Natural killer cell (primary cell): ENCODE measurements at regions of chr4 and their contacts with region 1.

Region 1: DNA sequence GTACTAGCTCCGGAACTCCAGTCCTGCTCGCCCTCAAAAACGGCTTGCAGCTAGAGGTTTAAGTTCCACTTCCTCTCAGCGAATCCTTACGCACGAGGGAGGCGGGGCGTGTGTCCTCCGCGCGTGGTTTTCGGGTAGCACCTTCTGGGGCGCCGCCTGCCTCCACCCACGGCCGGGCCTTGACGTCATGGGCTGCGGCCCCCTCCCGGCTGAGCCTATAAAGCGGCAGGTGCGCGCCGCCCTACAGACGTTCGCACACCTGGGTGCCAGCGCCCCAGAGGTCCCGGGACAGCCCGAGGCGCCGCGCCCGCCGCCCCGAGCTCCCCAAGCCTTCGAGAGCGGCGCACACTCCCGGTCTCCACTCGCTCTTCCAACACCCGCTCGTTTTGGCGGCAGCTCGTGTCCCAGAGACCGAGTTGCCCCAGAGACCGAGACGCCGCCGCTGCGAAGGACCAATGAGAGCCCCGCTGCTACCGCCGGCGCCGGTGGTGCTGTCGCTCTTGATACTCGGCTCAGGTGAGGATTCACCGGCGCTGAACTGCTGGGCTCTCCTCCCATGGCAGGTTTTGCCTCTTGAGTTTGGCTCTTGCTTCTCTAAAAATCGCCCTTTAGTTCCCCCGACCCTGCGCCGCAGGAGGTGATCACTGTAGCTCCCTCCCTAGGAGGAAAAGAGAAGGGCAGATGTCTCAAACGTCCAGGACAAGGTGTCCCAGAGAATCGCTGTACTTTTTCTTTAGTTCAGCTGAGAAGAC is at the start of gene AREG:
- DNase-seq: peak; percentile 91 to 96
- ATAC-seq: peak; percentile 94 to 96 (median 94)
- H3K4me3 ChIP-seq: peak within 1 kb of the TSS; percentile 85
- H3K4me3 Mint-ChIP-seq: peak within 1 kb of the TSS; percentile 90
- H3K27ac ChIP-seq: peak within 1 kb of the TSS; percentile 95
- H3K27ac Mint-ChIP-seq: peak within 1 kb of the TSS; percentile 90 to 95
- H3K4me1 ChIP-seq: peaks cover 7% of the 10 kb centered on the region
- H3K4me1 Mint-ChIP-seq: peaks cover 6 to 16% of the 10 kb centered on the region in 2 donors
- H3K27me3 ChIP-seq: no peaks in the 10 kb centered on the region
- H3K27me3 Mint-ChIP-seq: no peaks in the 10 kb centered on the region
- CTCF ChIP-seq: peak; percentile 62
- total RNA-seq, gene AREG: 11.3 to 47.2 (median 38.2) TPM

Region 2: DNA sequence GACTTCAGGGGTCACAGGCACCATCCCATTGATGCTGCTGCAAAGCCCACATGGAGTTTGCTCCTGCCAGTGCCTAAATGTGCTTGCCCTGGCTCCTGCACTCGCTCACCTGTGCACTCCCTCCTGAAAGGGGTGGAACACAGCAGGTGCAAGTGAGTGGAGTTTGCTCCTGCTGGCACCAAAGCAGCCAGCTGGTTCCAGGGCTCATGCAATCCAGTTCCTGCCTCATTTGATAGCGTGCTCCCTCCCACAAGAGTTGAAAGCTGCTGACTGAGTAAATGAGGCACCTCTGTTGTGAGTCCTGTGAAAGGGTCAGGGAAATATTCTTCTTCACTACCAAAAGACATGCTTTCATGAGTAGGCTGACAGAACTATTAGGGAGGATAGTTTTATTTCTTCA is 674.1 kb before region 1 on chr4:
- intact Hi-C with region 1: no loop called
- DNase-seq: no peak
- ATAC-seq: no peak
- H3K4me3 ChIP-seq: no peak overlapping the region
- H3K4me3 Mint-ChIP-seq: no peak overlapping the region
- H3K27ac ChIP-seq: no peak overlapping the region
- H3K27ac Mint-ChIP-seq: no peak overlapping the region
- H3K4me1 ChIP-seq: no peaks in the 10 kb centered on the region
- H3K4me1 Mint-ChIP-seq: no peaks in the 10 kb centered on the region
- H3K27me3 ChIP-seq: no peaks in the 10 kb centered on the region
- H3K27me3 Mint-ChIP-seq: no peaks in the 10 kb centered on the region
- CTCF ChIP-seq: no peak

Region 3: GRCh38 chr4:74157561-74158465 is 287.3 kb before region 1 on chr4 and contains the start of gene MTHFD2L:
- intact Hi-C with region 1: loop called (anchors 10 kb)
- DNase-seq: peak; percentile 77 to 85
- ATAC-seq: peak; percentile 95 to 97 (median 95)
- H3K4me3 ChIP-seq: peak within 1 kb of the TSS; percentile 55
- H3K4me3 Mint-ChIP-seq: peak within 1 kb of the TSS; percentile 87
- H3K27ac ChIP-seq: peak within 1 kb of the TSS; percentile 77
- H3K27ac Mint-ChIP-seq: peak within 1 kb of the TSS; percentile 84 to 89
- H3K4me1 ChIP-seq: peaks cover 8% of the 10 kb centered on the region
- H3K4me1 Mint-ChIP-seq: peaks cover 22 to 26% of the 10 kb centered on the region in 2 donors
- H3K27me3 ChIP-seq: peaks cover 2% of the 10 kb centered on the region
- H3K27me3 Mint-ChIP-seq: peaks cover 0 to 3% of the 10 kb centered on the region in 2 donors
- CTCF ChIP-seq: no peak
- total RNA-seq, gene MTHFD2L: 9.5 to 11.7 (median 10.4) TPM

Region 4: DNA sequence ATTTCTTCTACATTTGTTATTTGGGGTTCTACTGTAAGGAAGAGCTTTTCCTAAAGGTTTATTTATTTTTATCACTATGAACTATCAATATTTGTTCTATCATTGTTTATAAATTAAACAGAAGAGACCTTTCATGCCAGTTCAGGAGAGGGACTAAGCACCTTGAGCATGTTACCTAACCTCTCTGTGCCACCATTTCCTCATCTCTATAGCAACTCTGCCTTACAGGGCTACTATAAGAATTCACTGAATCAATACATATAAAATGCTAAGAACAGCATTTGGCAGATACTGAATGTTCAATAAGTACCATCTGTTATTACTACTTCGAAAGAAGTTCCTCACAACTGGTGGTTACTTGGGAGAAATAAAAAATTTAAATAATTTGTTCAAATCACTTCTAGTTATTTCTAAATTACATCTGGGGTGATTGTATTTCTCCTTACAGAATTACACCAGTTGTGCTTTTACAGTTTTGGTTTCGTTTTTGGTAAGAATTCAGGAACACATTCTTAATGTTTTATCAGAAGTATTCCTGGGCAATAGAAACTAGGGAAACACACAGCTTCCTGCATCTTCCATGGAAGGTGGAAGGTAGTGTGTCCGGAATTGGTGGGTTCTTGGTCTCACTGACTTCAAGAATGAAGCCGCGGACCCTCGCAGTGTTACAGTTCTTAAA is 47.2 kb before region 1 on chr4:
- intact Hi-C with region 1: loop called (anchors 1 kb)
- DNase-seq: peak in 1 of 2 donors; percentile 64
- ATAC-seq: peak; percentile 75 to 85 (median 80)
- H3K4me3 ChIP-seq: peak overlapping the region; percentile 94
- H3K4me3 Mint-ChIP-seq: peak overlapping the region; percentile 100
- H3K27ac ChIP-seq: peak overlapping the region; percentile 90
- H3K27ac Mint-ChIP-seq: peak overlapping the region; percentile 98 to 99
- H3K4me1 ChIP-seq: peaks cover 4% of the 10 kb centered on the region
- H3K4me1 Mint-ChIP-seq: peaks cover 7 to 9% of the 10 kb centered on the region in 2 donors
- H3K27me3 ChIP-seq: no peaks in the 10 kb centered on the region
- H3K27me3 Mint-ChIP-seq: no peaks in the 10 kb centered on the region
- CTCF ChIP-seq: no peak

Region 5: DNA sequence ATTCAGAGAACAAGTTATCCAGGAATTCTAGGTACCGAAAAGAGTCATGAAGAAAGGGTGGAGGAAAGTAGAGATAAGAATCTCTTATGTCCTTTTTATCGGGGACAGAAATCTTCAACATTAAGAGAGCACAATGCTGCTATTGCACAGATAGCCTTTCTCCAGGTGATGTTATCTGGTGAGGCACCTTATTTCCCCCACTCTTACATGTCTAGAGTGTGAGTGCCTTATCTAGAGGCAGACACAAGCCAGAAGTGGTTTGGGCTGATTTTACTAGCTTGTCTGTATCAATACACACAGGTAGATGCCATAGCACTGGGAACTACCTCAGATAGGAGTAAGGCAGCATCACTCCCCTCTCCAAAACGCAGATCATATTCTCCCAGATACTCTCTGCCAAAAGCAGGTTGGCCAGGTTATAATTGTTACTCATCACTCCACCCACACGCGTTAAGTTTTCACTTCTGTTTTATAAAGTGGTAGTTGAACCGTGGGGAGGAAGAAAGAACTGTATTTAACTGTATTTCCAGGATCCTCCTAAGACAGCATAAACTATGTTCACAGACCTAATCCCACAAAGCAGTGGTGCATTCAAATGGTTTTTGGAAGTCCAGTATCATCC is 38.3 kb after region 1 on chr4:
- intact Hi-C with region 1: no loop called
- DNase-seq: no peak
- ATAC-seq: no peak
- H3K4me3 ChIP-seq: no peak overlapping the region
- H3K4me3 Mint-ChIP-seq: no peak overlapping the region
- H3K27ac ChIP-seq: no peak overlapping the region
- H3K27ac Mint-ChIP-seq: no peak overlapping the region
- H3K4me1 ChIP-seq: no peaks in the 10 kb centered on the region
- H3K4me1 Mint-ChIP-seq: no peaks in the 10 kb centered on the region
- H3K27me3 ChIP-seq: peaks cover 2% of the 10 kb centered on the region
- H3K27me3 Mint-ChIP-seq: peaks cover 12 to 17% of the 10 kb centered on the region in 2 donors
- CTCF ChIP-seq: no peak